ENCODE measurements at regions of chr12 and their contacts with region 1.

Region 1: DNA sequence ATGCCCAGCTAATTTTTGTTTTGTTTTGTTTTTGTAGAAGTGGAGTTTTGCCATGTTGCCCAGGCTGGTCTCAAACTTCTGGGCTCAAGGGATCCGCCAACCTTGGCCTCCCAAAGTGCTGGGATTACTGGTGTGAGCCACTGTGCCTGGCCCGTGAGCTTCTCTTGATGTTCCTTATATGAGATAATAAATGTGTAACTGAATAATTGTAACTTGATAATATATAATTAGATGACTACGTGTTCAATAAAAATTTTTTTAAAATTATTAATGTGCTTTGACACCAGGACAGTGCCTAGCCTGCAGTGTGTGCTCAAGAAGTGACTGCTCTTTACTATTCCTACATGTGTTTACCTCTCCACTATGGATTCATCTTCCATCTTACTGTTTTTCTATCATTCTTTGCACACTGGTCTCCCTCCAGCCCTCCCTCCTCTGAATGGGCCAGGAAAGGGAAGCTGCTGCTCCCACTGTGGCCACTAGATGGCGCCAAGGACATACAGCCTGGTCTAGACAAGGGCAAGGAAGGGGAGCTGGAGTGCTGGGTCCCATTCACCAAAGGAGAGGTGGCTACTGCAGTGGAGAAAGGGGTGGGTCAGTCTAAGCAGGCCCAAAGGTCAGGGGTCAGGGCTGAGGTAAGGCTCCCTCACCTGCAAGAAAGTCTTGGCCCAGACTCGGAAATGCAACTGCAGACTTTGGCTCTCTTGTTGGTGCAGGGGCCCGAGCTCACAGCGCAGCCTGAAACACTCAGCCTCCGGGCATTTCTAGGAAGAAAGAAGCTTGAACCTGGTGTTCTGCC is 14.7 kb upstream of the ZNF385A start:
- DNase-seq: peak; percentile 92
- ATAC-seq: peak; percentile 91
- H3K4me3 Mint-ChIP-seq: no peak overlapping the region
- H3K27ac Mint-ChIP-seq: no peak overlapping the region
- H3K4me1 Mint-ChIP-seq: peaks cover 29% of the 10 kb centered on the region
- H3K27me3 Mint-ChIP-seq: no peaks in the 10 kb centered on the region

Region 2: DNA sequence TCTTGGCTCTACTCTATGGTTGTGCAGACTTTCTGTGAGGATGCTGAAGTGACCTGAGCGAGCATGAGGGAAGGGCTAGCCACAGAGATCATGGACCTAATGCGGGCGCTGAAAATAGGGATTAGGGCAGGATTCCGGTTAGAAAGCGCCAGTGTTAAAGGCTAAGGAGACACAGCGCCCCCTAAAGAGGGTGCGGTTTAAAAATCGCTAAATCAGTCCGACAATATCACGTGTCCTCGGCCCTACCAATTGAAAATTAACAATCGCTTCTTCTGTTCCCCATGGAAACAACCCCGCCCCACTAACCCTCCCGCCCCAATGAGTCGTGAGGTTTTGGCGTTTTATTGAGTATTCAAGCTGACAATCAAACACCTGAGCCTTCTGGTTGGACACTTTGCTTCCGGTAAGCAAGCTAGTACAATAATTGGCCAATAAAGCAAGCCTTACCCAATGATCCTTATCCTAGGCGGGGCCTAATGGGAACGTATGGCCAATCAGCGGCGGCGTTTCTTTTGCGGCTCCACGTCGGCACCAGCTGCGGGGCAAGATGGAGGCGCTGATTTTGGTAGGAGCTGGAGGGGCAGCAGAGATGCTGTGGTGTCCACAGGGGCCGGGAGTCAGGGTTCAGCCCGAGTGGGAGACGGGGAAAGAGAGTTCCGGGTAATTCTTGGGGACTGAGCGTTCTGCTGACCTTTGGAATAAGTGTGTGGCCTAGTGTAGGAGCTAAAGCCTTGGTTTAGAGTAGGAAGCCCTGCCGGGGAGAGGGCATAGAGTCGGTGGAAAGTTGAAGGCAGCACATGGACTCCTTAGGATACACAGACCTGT is 74.4 kb before region 1 on chr12 and contains the start of gene COPZ1:
- CTCF ChIA-PET with region 1: interaction called, 10 read pairs
- POLR2A ChIA-PET with region 1: no interaction called
- DNase-seq: peak; percentile 98
- ATAC-seq: peak; percentile 99
- H3K4me3 Mint-ChIP-seq: peak within 1 kb of the TSS; percentile 97
- H3K27ac Mint-ChIP-seq: peak within 1 kb of the TSS; percentile 92
- H3K4me1 Mint-ChIP-seq: peaks cover 38% of the 10 kb centered on the region
- H3K27me3 Mint-ChIP-seq: no peaks in the 10 kb centered on the region
- total RNA-seq, gene COPZ1: 105 to 112 TPM

Region 3: GRCh38 chr12:54411391-54412241 is 12.4 kb after region 1 on chr12:
- CTCF ChIA-PET with region 1: interaction called, 270 read pairs
- POLR2A ChIA-PET with region 1: interaction called, 13 read pairs
- DNase-seq: peak; percentile 56
- ATAC-seq: peak; percentile 16
- H3K4me3 Mint-ChIP-seq: peak overlapping the region; percentile 54
- H3K27ac Mint-ChIP-seq: peak overlapping the region; percentile 89
- H3K4me1 Mint-ChIP-seq: peaks cover 56% of the 10 kb centered on the region
- H3K27me3 Mint-ChIP-seq: no peaks in the 10 kb centered on the region

Region 4: GRCh38 chr12:54428050-54429013 is 29.1 kb after region 1 on chr12:
- CTCF ChIA-PET with region 1: interaction called, 505 read pairs
- POLR2A ChIA-PET with region 1: interaction called, 3 read pairs
- DNase-seq: no peak
- ATAC-seq: no peak
- H3K4me3 Mint-ChIP-seq: no peak overlapping the region
- H3K27ac Mint-ChIP-seq: peak overlapping the region; percentile 48
- H3K4me1 Mint-ChIP-seq: peaks cover 44% of the 10 kb centered on the region
- H3K27me3 Mint-ChIP-seq: peaks cover 34% of the 10 kb centered on the region

Region 5: DNA sequence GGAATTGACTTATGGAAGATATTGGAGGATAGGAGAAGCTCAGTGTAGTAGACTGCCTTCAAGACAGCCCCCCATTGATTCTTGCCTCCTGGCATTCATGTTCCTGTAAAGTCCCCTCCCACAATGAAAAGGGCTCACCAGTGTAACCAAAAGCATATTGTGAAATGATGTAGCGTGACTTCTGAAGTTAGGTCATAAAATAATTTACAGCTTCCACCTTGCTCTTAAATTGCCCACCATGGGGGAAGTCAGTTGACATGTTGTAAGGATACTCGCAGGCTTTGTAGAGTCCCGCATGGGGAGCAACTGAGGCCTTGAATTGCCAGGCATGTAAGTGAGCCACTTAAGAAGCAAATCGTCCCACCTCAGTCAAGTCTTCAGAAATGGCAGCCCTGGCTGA is 49.1 kb after region 1 on chr12:
- CTCF ChIA-PET with region 1: interaction called, 88 read pairs
- POLR2A ChIA-PET with region 1: no interaction called
- DNase-seq: no peak
- ATAC-seq: no peak
- H3K4me3 Mint-ChIP-seq: no peak overlapping the region
- H3K27ac Mint-ChIP-seq: no peak overlapping the region
- H3K4me1 Mint-ChIP-seq: no peaks in the 10 kb centered on the region
- H3K27me3 Mint-ChIP-seq: peaks cover 12% of the 10 kb centered on the region

Region 6: DNA sequence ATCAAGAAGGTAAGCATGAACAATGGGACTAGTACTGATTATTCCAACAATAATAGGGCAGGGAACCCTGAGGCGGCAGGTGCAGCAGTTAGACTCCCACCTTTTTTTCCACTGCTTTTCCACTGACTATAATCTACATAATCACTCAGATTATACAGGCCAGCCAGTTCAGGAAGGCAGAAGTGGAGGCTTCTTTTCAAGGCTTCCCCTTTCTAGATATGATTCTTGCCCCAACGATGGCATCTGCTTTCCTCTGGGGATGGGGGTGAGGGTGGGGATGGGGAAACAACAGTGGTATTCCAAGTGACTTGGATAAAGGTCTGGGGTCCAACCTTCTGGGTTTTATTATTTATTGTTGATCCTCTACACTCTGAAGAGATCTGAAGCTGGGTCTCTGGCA is 98.7 kb after region 1 on chr12:
- CTCF ChIA-PET with region 1: interaction called, 26 read pairs
- POLR2A ChIA-PET with region 1: interaction called, 4 read pairs
- DNase-seq: no peak
- ATAC-seq: no peak
- H3K4me3 Mint-ChIP-seq: peak overlapping the region; percentile 96
- H3K27ac Mint-ChIP-seq: peak overlapping the region; percentile 95
- H3K4me1 Mint-ChIP-seq: peaks cover 43% of the 10 kb centered on the region
- H3K27me3 Mint-ChIP-seq: no peaks in the 10 kb centered on the region